Esophagus squamous epithelium (tissue), 5 donors: ENCODE measurements at regions of chr5 and their contacts with region 1.

Region 1: DNA sequence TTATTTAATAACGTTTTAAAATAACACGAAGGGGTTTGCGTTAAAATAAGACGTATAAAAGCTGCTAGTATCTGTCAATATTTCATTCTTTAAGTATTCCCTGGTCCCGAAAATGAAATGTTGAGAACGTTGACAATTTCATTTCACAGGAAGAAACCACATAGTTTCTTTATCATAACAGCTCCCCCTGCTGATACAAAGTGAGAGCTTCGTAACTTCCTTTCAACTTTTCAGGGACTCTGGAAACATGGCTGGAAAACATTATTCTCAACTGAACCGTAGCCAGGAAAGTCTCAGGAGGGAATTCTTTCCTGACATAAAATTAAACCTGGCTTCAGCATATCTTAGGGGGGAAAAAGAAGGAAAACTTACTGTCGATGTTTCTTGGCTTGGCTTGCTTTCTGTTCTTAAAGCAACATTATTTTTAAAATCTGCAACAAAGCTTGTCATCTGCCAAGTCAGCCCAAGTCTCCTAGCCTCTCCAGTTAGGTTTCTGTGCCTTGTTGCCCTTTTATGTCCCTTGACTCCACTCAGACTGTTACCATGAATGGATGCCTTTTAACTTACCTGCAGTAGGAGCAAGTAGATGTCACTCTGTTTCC is 122.9 kb upstream of the DAB2 start:
- DNase-seq: no peak
- H3K4me3 ChIP-seq: no peak overlapping the region
- H3K27ac ChIP-seq: no peak overlapping the region
- H3K4me1 ChIP-seq: peaks cover 0 to 11% (median 0%) of the 10 kb centered on the region in 3 donors
- H3K27me3 ChIP-seq: no peaks in the 10 kb centered on the region
- CTCF ChIP-seq: peak in 5 of 6 experiments; percentile 54 to 78 (median 60)
- POLR2A ChIP-seq: no peak

Region 2: DNA sequence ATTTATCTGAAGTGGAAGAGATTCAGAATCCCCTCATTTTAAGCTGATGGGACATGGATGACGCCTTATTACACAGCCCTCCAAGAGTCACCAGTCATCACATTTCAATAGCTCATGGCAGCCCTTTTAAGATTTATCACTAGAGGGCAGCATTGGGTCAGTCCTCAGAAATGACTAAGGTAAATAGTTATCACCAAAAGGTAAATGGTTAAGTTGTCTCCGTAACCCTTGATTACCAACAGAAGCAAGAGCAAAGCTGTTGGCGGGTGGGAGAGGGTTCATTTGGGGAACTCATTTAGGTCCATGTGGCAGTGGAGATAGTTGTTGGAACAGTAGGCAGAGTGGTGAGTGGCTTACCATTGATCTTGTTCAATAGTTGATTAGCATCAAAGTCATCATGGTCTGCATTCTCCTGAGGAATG is 171.3 kb before region 1 on chr5:
- intact Hi-C with region 1: loop called (anchors 5 kb)
- DNase-seq: no peak
- H3K4me3 ChIP-seq: no peak overlapping the region
- H3K27ac ChIP-seq: no peak overlapping the region
- H3K4me1 ChIP-seq: no peaks in the 10 kb centered on the region
- H3K27me3 ChIP-seq: no peaks in the 10 kb centered on the region
- CTCF ChIP-seq: peak in 5 of 6 experiments; percentile 54 to 77 (median 60)
- POLR2A ChIP-seq: no peak